ENCODE measurements at regions of chr14 and their contacts with region 1.

Region 1: DNA sequence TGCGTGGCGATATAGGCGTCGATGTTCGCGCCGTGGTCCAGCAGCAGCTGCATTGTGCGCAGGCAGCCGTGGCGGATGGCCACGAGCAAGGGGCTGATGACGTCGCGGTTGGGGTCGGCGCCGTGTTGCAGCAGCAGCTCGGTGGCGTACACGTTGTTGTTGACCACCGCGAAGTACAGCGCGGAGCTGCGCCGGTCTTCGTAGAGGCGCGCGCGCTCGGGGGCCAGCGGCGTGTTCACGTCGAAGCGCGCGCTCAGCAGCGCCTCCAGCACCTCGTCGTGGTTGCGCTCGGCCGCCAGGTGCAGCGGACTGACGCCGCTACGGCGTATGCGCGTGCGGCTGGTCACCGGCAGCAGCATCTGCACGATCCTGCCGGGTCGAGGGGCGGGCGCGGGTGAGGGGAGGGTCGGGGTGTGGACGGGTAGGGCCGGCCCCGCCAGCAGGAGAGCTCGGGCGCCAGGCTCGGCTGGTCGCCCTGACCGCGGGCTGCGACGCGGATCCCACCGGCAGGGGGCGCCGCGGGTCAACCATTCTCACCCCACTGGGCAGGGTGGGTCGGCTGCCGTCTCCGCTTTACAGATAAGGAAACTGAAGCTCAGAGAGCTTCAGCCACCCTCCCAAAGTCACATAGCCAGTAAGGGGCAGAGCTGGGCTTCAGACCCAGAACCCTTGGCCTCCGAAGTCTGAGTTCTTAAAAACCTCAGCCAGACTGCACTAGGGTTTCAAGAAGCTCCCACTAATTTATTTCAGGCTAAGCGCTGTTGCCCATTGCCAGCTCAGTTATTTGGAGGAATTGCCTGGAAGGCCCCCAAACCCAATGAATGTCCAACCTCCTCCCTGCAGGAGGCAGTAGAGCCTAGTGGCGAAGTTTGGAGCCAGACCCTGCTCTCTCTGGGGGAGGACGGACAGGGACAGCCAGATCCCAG is 12.4 kb downstream of the FAM181A start:
- DNase-seq: peak; percentile 53
- H3K4me3 ChIP-seq: no peak overlapping the region
- H3K27ac ChIP-seq: no peak overlapping the region
- H3K4me1 ChIP-seq: no peaks in the 10 kb centered on the region
- H3K27me3 ChIP-seq: peaks cover 0 to 3% of the 10 kb centered on the region in 2 experiments
- CTCF ChIP-seq: peak; percentile 74 to 77
- POLR2A ChIP-seq: no peak

Region 2: GRCh38 chr14:93317875-93318807 is 621.4 kb before region 1 on chr14:
- CTCF ChIA-PET with region 1: no interaction called
- POLR2A ChIA-PET with region 1: no interaction called
- dilution Hi-C with region 1: no loop called
- intact Hi-C with region 1: no loop called
- DNase-seq: peak; percentile 77
- H3K4me3 ChIP-seq: peak overlapping the region in 1 of 3 experiments; percentile 55
- H3K27ac ChIP-seq: peak overlapping the region; percentile 78
- H3K4me1 ChIP-seq: peaks cover 34% of the 10 kb centered on the region
- H3K27me3 ChIP-seq: no peaks in the 10 kb centered on the region
- CTCF ChIP-seq: no peak
- POLR2A ChIP-seq: no peak

Region 3: GRCh38 chr14:93959239-93960107 is 19.9 kb after region 1 on chr14:
- CTCF ChIA-PET with region 1: interaction called, 60 read pairs
- POLR2A ChIA-PET with region 1: no interaction called
- dilution Hi-C with region 1: no loop called
- intact Hi-C with region 1: no loop called
- DNase-seq: peak; percentile 36
- H3K4me3 ChIP-seq: no peak overlapping the region
- H3K27ac ChIP-seq: peak overlapping the region; percentile 49
- H3K4me1 ChIP-seq: no peaks in the 10 kb centered on the region
- H3K27me3 ChIP-seq: no peaks in the 10 kb centered on the region
- CTCF ChIP-seq: no peak
- POLR2A ChIP-seq: no peak

Region 4: GRCh38 chr14:93984987-93985410 is 45.4 kb after region 1 on chr14:
- CTCF ChIA-PET with region 1: interaction called, 37 read pairs
- POLR2A ChIA-PET with region 1: no interaction called
- dilution Hi-C with region 1: no loop called
- intact Hi-C with region 1: no loop called
- DNase-seq: no peak
- H3K4me3 ChIP-seq: no peak overlapping the region
- H3K27ac ChIP-seq: no peak overlapping the region
- H3K4me1 ChIP-seq: no peaks in the 10 kb centered on the region
- H3K27me3 ChIP-seq: no peaks in the 10 kb centered on the region
- CTCF ChIP-seq: peak; percentile 12 to 33
- POLR2A ChIP-seq: no peak

Region 5: GRCh38 chr14:94001501-94002396 is 62.2 kb after region 1 on chr14:
- CTCF ChIA-PET with region 1: interaction called, 368 read pairs
- POLR2A ChIA-PET with region 1: no interaction called
- dilution Hi-C with region 1: no loop called
- intact Hi-C with region 1: loop called (anchors 1 kb)
- DNase-seq: peak; percentile 49
- H3K4me3 ChIP-seq: no peak overlapping the region
- H3K27ac ChIP-seq: no peak overlapping the region
- H3K4me1 ChIP-seq: no peaks in the 10 kb centered on the region
- H3K27me3 ChIP-seq: no peaks in the 10 kb centered on the region
- CTCF ChIP-seq: peak; percentile 93 to 96
- POLR2A ChIP-seq: no peak

Measured in endothelial cell of umbilical vein (primary cell).